ENCODE measurements at regions of chr22 and their contacts with region 1.

Region 1: DNA sequence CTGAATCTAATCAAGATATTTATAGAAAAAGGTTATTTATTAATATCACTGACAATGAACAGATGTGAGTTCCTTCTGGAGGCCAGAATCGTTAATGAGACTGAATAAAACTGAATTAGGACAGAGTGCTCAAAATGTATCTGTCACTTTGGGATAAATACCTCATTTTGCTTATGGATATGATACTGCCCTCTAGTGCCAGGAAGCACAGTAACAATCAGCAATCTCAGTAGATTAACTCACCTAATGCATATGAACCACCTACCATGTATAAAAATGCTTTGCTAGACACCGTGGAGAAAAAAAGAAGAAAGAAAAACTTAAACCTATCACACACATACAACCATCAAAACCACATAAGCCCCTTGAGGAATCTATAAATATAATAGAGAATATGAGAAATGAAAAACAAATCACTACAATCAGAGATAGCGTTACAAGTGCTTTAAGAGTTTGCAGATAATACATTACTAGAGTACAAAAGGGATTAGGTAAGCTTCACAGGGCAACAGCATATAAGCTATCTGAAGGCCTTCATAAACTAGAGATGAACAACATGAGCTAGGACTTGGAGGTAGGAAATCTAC is 117.4 kb downstream of the SGSM3 start:
- DNase-seq: no peak
- H3K4me3 Mint-ChIP-seq: no peak overlapping the region
- H3K27ac Mint-ChIP-seq: no peak overlapping the region
- H3K4me1 Mint-ChIP-seq: peaks cover 35% of the 10 kb centered on the region
- H3K27me3 Mint-ChIP-seq: no peaks in the 10 kb centered on the region

Region 2: DNA sequence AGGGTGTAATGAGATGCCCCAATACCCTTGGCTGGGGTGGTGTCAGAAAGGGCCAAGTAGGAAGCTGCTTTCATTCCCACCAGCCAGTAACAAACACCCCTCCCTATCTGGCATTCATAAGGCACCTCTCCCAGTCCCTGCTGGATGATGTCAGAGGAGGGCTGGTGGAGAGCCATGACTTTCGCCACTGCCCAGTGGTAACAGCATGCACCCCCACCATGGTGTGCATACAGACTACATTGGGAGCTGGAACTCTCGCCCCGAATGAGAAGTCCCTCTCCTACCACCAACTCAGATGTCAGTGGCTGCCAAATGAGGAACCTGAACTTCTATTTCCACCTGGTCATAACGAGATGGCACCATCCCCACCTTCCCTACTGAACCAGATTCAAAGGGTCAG is 44.0 kb before region 1 on chr22:
- CTCF ChIA-PET with region 1: interaction called, 77 read pairs
- DNase-seq: no peak
- H3K4me3 Mint-ChIP-seq: no peak overlapping the region
- H3K27ac Mint-ChIP-seq: no peak overlapping the region
- H3K4me1 Mint-ChIP-seq: peaks cover 38% of the 10 kb centered on the region
- H3K27me3 Mint-ChIP-seq: no peaks in the 10 kb centered on the region

Region 3: GRCh38 chr22:40552070-40552469 is 64.3 kb after region 1 on chr22:
- CTCF ChIA-PET with region 1: no interaction called
- DNase-seq: no peak
- H3K4me3 Mint-ChIP-seq: no peak overlapping the region
- H3K27ac Mint-ChIP-seq: no peak overlapping the region
- H3K4me1 Mint-ChIP-seq: peaks cover 10% of the 10 kb centered on the region
- H3K27me3 Mint-ChIP-seq: no peaks in the 10 kb centered on the region